Ovary (tissue), 10 donors: ENCODE measurements at regions of chr5 and their contacts with region 1.

Region 1: GRCh38 chr5:173498286-173498685 is 118.2 kb downstream of the BOD1 start:
- DNase-seq: peak in 3 of 5 donors; percentile 22 to 50 (median 39)
- H3K4me3 ChIP-seq: no peak overlapping the region
- H3K27ac ChIP-seq: no peak overlapping the region
- H3K4me1 ChIP-seq: peaks cover 2% of the 10 kb centered on the region
- H3K27me3 ChIP-seq: no peaks in the 10 kb centered on the region
- CTCF ChIP-seq: no peak
- EP300 ChIP-seq: no peak
- POLR2A ChIP-seq: no peak

Region 2: GRCh38 chr5:173315495-173316350 is 182.6 kb before region 1 on chr5:
- intact Hi-C with region 1: loop called in 1 of 4 experiments (anchors 10 kb)
- DNase-seq: peak in 3 of 5 donors; percentile 51 to 67 (median 57)
- H3K4me3 ChIP-seq: no peak overlapping the region
- H3K27ac ChIP-seq: no peak overlapping the region
- H3K4me1 ChIP-seq: peaks cover 20% of the 10 kb centered on the region
- H3K27me3 ChIP-seq: no peaks in the 10 kb centered on the region
- CTCF ChIP-seq: no peak
- EP300 ChIP-seq: no peak
- POLR2A ChIP-seq: no peak

Region 3: GRCh38 chr5:173625696-173626504 is 127.6 kb after region 1 on chr5:
- intact Hi-C with region 1: no loop called
- DNase-seq: no peak
- H3K4me3 ChIP-seq: no peak overlapping the region
- H3K27ac ChIP-seq: no peak overlapping the region
- H3K4me1 ChIP-seq: peaks cover 2% of the 10 kb centered on the region
- H3K27me3 ChIP-seq: no peaks in the 10 kb centered on the region
- CTCF ChIP-seq: no peak
- EP300 ChIP-seq: no peak
- POLR2A ChIP-seq: no peak